ENCODE measurements at regions of chr11 and their contacts with region 1.

Region 1: DNA sequence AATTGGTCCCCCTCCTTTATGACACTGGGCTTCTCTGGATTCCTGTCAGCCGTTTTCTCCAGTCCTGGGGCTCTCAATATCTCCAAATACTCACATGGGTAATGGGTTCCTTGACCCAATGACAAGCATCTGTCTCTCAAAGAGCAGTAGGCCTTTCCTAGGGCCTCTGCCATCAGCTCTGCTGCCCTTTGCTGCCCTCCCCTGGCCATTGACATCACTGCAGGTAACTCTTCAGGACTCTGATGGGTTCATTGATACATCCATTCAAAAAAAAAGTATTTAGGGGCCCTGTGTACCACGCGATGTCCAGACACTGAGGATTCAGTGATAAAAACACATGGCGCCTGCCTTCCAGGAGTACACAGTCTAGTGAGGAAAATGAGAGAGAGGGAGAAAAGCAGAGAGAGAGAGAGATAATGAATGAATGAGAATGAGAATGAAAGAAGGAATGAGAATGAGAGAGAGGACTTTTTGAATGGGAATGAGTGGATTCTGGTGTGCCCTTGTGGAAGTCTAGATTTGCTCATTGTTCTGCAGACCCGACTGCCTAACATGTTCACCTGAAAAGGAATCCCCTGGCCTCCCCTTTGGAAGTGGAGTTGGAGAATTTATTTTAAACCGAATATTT is 42.6 kb upstream of the OLFML1 start:
- DNase-seq: peak; percentile 40 to 97 (median 84)

Region 2: GRCh38 chr11:7143908-7144307 is 298.8 kb before region 1 on chr11:
- intact Hi-C with region 1: loop called (anchors 1 kb)
- DNase-seq: no peak

Region 3: GRCh38 chr11:7251836-7252682 is 190.6 kb before region 1 on chr11 and contains the start of gene SYT9:
- intact Hi-C with region 1: loop called (anchors 2 kb)
- DNase-seq: peak; percentile 56 to 96 (median 71)

Region 4: GRCh38 chr11:7490054-7490453 is 47.4 kb after region 1 on chr11:
- intact Hi-C with region 1: no loop called
- DNase-seq: no peak

Measured in posterior cingulate gyrus (tissue), 11 donors.